Psoas muscle (tissue), 8 donors: ENCODE measurements at regions of chr19 and their contacts with region 1.

Region 1: DNA sequence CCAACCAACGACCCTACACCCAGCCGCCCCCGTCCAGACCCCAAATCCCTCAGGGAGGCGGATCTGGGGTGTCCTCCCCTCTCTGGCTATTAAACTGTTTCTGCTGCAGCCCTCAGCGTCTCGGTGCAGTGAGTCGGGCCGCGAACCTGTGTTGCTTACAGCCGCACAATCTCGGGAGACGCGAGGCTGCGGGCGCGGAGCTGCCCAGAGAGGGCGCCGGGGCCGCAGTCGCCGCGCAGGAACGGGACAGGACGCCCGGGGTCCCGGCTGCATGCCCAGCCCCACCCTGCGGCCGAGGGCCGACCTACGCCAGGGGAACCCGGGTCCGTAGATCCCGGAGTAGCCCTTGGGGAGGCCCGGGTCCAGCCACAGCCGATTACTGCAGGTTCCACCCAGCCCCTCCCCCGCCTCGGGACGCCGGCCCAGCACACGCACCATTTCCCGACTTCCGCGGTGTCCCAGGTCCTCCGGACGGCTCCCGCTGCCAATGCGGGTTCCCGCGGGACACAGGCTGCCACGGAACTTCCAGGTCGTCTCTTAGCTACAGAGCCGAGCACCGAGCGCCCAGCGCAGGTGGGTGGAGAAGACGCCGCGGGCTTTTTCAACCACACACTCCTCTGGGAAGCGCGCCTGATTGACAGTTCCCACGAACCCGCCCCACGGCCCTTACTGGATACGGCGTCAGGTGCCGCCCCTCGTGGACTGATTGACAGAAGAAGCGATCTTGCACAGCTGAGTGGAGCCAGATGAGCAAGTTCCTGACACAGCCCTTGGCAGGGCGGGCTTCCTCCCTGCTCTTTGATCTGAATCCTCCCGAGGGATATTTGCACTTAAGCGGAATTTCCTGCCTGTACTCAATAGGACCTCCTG is at the start of gene ZNF799:
- DNase-seq: peak; percentile 98
- ATAC-seq: peak; percentile 99
- H3K4me3 ChIP-seq: peak within 1 kb of the TSS; percentile 85
- H3K27ac ChIP-seq: peak within 1 kb of the TSS; percentile 84
- H3K4me1 ChIP-seq: no peaks in the 10 kb centered on the region
- H3K27me3 ChIP-seq: no peaks in the 10 kb centered on the region
- CTCF ChIP-seq: no peak
- total RNA-seq, gene ZNF799: 1.9 TPM

Region 2: GRCh38 chr19:12365236-12366162 is 35.4 kb before region 1 on chr19 and contains the start of gene ZNF442:
- intact Hi-C with region 1: loop called in 1 of 2 experiments (anchors 5 kb)
- DNase-seq: peak; percentile 96 to 98
- ATAC-seq: peak; percentile 99
- H3K4me3 ChIP-seq: peak within 1 kb of the TSS; percentile 97
- H3K27ac ChIP-seq: peak within 1 kb of the TSS; percentile 95
- H3K4me1 ChIP-seq: peaks cover 11% of the 10 kb centered on the region
- H3K27me3 ChIP-seq: no peaks in the 10 kb centered on the region
- CTCF ChIP-seq: peak; percentile 64
- total RNA-seq, gene ZNF442: 0.66 to 2.2 (median 1.3) TPM

Region 3: GRCh38 chr19:12440541-12441316 is 39.9 kb after region 1 on chr19 and contains the start of gene ZNF443:
- intact Hi-C with region 1: loop called in 1 of 2 experiments (anchors 5 kb)
- DNase-seq: peak; percentile 99
- ATAC-seq: peak; percentile 99 to 100 (median 100)
- H3K4me3 ChIP-seq: peak within 1 kb of the TSS; percentile 73
- H3K27ac ChIP-seq: peak within 1 kb of the TSS; percentile 69
- H3K4me1 ChIP-seq: no peaks in the 10 kb centered on the region
- H3K27me3 ChIP-seq: no peaks in the 10 kb centered on the region
- CTCF ChIP-seq: no peak
- total RNA-seq, gene ZNF443: 1.1 to 2.3 (median 1.2) TPM

Region 4: DNA sequence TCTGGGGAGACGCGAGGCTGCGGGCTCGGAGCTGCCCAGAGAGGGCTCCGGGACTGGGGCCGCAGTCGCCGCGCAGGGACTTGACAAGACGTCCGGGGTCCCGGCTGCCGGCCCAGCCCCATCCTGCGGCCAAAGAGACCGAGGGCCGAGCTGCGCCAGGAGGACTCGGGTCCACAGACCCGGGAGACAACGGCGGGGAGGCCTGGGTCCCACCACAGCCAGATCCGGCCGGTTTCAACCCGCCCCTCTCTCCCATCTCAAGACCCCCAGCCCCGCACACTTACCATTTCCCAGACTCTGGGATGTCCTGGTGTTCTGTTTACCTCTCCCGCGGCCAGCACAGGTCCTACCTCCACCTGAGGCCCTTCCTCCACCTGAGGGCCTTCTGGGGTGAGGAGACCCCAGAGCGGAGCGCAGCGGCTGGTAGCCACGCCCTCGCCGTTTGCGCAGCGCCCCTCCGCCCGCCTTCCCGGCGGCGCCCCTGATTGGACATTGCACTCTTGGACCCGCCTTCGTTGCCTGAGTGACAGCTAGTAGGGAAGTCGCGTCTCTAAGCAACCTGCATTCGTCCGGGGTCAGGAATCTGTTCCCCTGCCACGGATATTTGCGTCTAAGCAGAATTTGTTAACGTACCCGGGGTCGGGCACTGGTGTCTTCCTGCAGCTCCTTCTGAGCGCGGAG is 83.6 kb after region 1 on chr19 and contains the start of gene ZNF709:
- intact Hi-C with region 1: loop called in 1 of 2 experiments (anchors 5 kb)
- DNase-seq: peak; percentile 87 to 93
- ATAC-seq: peak; percentile 96 to 100 (median 98)
- H3K4me3 ChIP-seq: peak within 1 kb of the TSS; percentile 85
- H3K27ac ChIP-seq: peak within 1 kb of the TSS; percentile 69
- H3K4me1 ChIP-seq: peaks cover 15% of the 10 kb centered on the region
- H3K27me3 ChIP-seq: no peaks in the 10 kb centered on the region
- CTCF ChIP-seq: no peak
- total RNA-seq, gene ZNF709: 1.3 to 1.8 (median 1.7) TPM in 3 of 4 donors, not detected in the other

Region 5: DNA sequence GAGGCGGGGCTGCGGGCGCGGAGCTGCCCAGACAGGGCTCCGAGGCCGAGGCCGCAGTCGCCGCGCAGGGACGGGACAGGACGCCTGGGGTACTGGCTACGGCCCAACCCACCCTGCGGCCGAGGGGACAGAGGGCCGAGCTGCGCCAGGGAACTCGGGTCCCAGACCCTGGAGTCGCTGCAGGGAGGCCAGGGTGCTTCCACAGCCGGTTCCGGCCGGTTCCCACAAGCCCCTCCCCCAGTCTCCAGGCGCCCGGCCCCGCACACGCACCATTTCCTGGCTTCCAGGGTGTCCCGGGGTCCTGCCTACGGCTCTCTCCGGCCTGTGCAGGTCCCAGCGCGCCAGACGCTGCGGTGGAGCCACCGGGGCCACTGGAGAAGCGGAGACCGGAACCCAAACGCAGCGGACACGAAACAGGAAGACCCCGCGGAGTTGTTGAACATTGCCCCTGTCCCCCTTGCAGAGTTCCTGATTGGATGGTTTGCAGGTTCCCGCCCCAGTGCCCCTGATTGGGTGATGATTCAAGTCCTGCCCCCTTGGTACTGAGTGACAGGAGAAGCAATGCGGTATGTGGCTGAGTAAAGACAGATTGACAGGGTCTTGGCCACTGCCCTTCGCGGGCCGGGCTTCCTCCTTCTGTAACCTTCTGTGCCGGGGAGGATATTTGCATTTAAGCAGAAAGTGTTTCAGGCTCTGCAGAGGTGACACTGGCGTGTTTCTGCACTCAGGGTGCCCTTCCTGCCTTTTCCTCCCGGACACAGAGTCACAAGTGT is 150.4 kb after region 1 on chr19 and contains the start of gene ZNF564:
- intact Hi-C with region 1: loop called in 1 of 2 experiments (anchors 10 kb)
- DNase-seq: peak; percentile 94 to 96
- ATAC-seq: peak; percentile 97 to 98 (median 98)
- H3K4me3 ChIP-seq: peak within 1 kb of the TSS; percentile 98
- H3K27ac ChIP-seq: peak within 1 kb of the TSS; percentile 97
- H3K4me1 ChIP-seq: peaks cover 23% of the 10 kb centered on the region
- H3K27me3 ChIP-seq: peaks cover 0 to 4% (median 3%) of the 10 kb centered on the region in 3 donors
- CTCF ChIP-seq: no peak
- total RNA-seq, gene ZNF564: 3.5 to 6.2 (median 5.4) TPM

Region 6: DNA sequence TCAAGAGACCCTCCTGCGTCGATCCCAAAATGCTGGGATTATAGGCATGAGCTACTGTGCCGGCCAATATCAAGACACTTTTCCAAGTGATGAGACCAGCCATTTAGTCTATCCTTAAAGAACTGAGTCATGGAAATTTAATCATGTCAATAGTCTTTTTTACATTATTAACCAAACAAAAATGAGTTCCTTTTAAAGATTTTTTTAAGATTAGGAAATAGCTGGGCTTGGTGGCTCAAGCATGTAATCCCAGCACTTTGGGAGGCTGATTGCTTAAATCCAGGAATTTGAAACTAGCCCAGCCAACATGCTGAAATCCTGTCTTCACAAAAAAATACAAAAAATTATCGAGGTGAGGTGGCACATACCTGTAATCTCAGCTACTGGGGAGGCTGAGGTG is 167.1 kb after region 1 on chr19:
- intact Hi-C with region 1: no loop called
- DNase-seq: no peak
- ATAC-seq: no peak
- H3K4me3 ChIP-seq: no peak overlapping the region
- H3K27ac ChIP-seq: no peak overlapping the region
- H3K4me1 ChIP-seq: no peaks in the 10 kb centered on the region
- H3K27me3 ChIP-seq: no peaks in the 10 kb centered on the region
- CTCF ChIP-seq: no peak